Caco-2 (cell line): ENCODE measurements at regions of chr2 and their contacts with region 1.

Region 1: DNA sequence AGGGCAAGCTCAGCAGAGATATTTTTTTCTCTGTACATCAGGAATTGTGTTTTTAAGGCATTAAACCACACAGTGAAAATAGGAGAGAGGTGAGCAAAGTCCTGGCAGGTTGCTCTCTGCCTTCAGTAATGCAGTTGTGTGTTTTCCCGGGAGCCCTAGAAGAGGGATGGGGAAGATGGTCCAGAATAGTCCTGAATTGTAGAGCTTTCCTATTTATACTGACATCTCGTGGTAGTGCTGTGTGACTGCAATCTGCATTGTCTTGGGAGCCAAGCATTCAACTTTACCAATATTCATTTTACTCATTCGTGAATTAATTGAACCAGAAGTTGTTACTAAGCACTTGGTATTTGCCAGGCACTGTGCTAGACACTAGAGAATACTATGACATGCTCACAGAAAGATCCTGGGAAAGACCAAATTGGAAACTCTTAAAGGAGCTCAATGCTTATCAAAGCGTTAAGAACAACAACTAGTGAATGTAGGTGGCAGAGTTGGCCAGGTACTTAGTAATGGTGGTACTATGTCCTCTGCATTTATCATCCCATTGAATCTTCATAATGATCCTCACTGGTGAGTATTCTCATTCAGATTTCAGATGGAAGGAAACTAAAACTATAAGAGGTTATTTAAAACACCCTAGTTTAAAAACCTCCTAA is 214.6 kb downstream of the TRIB2 start:
- DNase-seq: peak in 1 of 2 experiments; percentile 14
- H3K4me3 ChIP-seq: no peak overlapping the region
- H3K4me3 Mint-ChIP-seq: no peak overlapping the region
- H3K27ac Mint-ChIP-seq: no peak overlapping the region
- H3K4me1 ChIP-seq: no peaks in the 10 kb centered on the region; the same call in 1 of the 2 replicates
- H3K4me1 Mint-ChIP-seq: no peaks in the 10 kb centered on the region
- H3K27me3 ChIP-seq: no peaks in the 10 kb centered on the region; the same call in 1 of the 2 replicates
- H3K27me3 Mint-ChIP-seq: peaks cover 3% of the 10 kb centered on the region
- CTCF ChIP-seq: peak; percentile 75 to 78

Region 2: DNA sequence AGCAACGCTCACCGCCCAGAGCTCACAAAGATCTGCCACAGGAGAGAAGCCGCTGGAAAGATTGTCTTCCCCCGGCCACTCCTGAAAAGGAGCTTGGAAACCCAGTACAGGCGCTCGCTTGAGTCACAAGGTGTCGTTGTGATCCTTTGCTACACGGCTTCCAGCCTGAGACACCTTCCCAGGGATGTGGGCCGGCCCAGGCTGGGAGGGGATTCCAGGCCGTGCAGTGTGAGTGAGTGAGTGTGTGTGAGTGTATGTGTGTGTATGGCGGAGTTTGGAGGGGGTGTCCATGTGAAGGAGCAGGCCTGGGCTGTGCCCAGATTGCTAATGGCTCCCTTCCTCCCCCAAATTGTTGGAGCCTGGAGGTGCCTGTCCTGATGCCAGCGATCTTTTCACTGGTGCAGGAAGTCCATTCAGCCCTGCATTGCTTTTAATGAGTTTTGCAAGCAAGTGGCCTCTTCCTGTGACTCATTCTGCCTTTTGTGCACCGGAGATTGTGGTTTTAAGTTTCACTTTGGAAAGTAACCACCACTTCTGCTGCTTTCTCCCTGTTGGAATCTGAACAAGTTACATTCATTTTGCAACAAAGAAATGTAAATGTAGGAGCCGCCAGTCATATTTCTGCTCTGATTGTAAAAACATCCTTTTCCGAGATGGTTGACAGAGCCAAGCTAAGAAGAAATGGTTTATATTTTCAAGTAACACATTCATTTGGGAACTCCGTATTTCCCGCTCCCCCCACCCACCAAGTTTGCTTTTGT is 1101.2 kb before region 1 on chr2:
- CTCF ChIA-PET with region 1: interaction called, 5 read pairs
- POLR2A ChIA-PET with region 1: no interaction called
- intact Hi-C with region 1: loop called (anchors 2 kb)
- DNase-seq: peak; percentile 60 to 73
- H3K4me3 ChIP-seq: no peak overlapping the region
- H3K4me3 Mint-ChIP-seq: peak overlapping the region; percentile 55
- H3K27ac Mint-ChIP-seq: no peak overlapping the region
- H3K4me1 ChIP-seq: no peaks in the 10 kb centered on the region
- H3K4me1 Mint-ChIP-seq: no peaks in the 10 kb centered on the region
- H3K27me3 ChIP-seq: no peaks in the 10 kb centered on the region
- H3K27me3 Mint-ChIP-seq: no peaks in the 10 kb centered on the region
- CTCF ChIP-seq: peak in 1 of 2 experiments; percentile 33

Region 3: GRCh38 chr2:12169721-12170120 is 761.6 kb before region 1 on chr2:
- CTCF ChIA-PET with region 1: no interaction called
- POLR2A ChIA-PET with region 1: no interaction called
- intact Hi-C with region 1: loop called (anchors 10 kb)
- DNase-seq: no peak
- H3K4me3 ChIP-seq: no peak overlapping the region
- H3K4me3 Mint-ChIP-seq: no peak overlapping the region
- H3K27ac Mint-ChIP-seq: no peak overlapping the region
- H3K4me1 ChIP-seq: no peaks in the 10 kb centered on the region
- H3K4me1 Mint-ChIP-seq: no peaks in the 10 kb centered on the region
- H3K27me3 ChIP-seq: 0 out of 2 replicates have a peak, but pooled peaks cover 2% of the 10 kb centered on the region
- H3K27me3 Mint-ChIP-seq: no peaks in the 10 kb centered on the region
- CTCF ChIP-seq: no peak

Region 4: GRCh38 chr2:12433628-12433994 is 497.7 kb before region 1 on chr2:
- CTCF ChIA-PET with region 1: interaction called, 22 read pairs
- POLR2A ChIA-PET with region 1: no interaction called
- intact Hi-C with region 1: loop called (anchors 1 kb)
- DNase-seq: peak; percentile 41 to 49
- H3K4me3 ChIP-seq: no peak overlapping the region
- H3K4me3 Mint-ChIP-seq: no peak overlapping the region
- H3K27ac Mint-ChIP-seq: no peak overlapping the region
- H3K4me1 ChIP-seq: no peaks in the 10 kb centered on the region
- H3K4me1 Mint-ChIP-seq: no peaks in the 10 kb centered on the region
- H3K27me3 ChIP-seq: no peaks in the 10 kb centered on the region
- H3K27me3 Mint-ChIP-seq: peaks cover 4% of the 10 kb centered on the region
- CTCF ChIP-seq: peak in 1 of 2 experiments; percentile 53

Region 5: GRCh38 chr2:12881951-12882350 is 49.4 kb before region 1 on chr2:
- CTCF ChIA-PET with region 1: no interaction called
- POLR2A ChIA-PET with region 1: no interaction called
- intact Hi-C with region 1: loop called (anchors 1 kb)
- DNase-seq: no peak
- H3K4me3 ChIP-seq: no peak overlapping the region
- H3K4me3 Mint-ChIP-seq: no peak overlapping the region
- H3K27ac Mint-ChIP-seq: no peak overlapping the region
- H3K4me1 ChIP-seq: no peaks in the 10 kb centered on the region
- H3K4me1 Mint-ChIP-seq: no peaks in the 10 kb centered on the region
- H3K27me3 ChIP-seq: no peaks in the 10 kb centered on the region
- H3K27me3 Mint-ChIP-seq: peaks cover 4% of the 10 kb centered on the region
- CTCF ChIP-seq: no peak

Region 6: DNA sequence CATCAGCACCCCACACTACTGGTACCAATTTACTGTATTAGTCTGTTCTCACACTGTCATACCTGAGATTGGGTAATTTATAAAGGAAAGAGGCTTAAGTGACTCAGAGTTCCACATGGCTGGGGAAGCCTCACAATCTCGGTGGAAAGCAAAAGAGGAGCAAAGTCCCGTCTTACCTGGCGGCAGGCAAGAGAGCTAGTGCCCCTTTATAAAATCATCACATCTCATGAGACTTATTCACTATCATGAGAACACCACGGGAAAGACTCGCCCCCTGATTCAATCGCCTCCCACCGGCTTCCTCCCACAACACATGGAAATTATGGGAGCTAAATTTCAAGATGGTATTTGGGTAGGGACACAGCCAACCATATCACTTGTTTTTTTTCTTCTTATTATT is 502.6 kb after region 1 on chr2:
- CTCF ChIA-PET with region 1: no interaction called
- POLR2A ChIA-PET with region 1: no interaction called
- intact Hi-C with region 1: no loop called
- DNase-seq: no peak
- H3K4me3 ChIP-seq: no peak overlapping the region
- H3K4me3 Mint-ChIP-seq: no peak overlapping the region
- H3K27ac Mint-ChIP-seq: no peak overlapping the region
- H3K4me1 ChIP-seq: no peaks in the 10 kb centered on the region
- H3K4me1 Mint-ChIP-seq: no peaks in the 10 kb centered on the region
- H3K27me3 ChIP-seq: no peaks in the 10 kb centered on the region
- H3K27me3 Mint-ChIP-seq: peaks cover 4% of the 10 kb centered on the region
- CTCF ChIP-seq: no peak